ENCODE measurements at regions of chr17 and their contacts with region 1.

Region 1: DNA sequence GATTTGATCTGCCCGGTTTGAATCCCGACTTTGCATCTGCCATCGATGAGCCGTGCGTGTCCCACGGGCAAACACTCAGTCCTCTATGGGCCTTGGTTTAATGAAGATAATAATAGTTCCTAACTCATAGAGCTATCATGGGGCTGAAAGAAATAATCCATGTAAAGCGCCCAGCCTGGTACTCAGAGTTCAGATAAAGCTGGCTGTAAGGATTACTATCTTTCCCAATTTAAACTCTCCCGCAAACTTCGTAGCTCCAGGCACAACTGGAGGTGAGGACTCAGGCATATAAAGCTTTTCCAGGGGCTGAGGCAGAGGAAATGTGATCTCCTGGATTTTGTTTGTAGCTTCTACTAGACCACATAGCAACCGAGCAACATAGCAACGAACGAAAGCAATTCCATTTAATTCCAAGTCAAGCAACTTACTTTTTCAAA is 16.3 kb downstream of the ALOX15 start:
- DNase-seq: no peak
- H3K4me3 ChIP-seq: no peak overlapping the region
- CTCF ChIP-seq: no peak

Region 2: GRCh38 chr17:4420692-4421131 is 204.5 kb before region 1 on chr17:
- CTCF ChIA-PET with region 1: interaction called, 56 read pairs
- POLR2A ChIA-PET with region 1: no interaction called
- DNase-seq: peak; percentile 12
- H3K4me3 ChIP-seq: no peak overlapping the region; the same call in 1 of the 2 replicates
- CTCF ChIP-seq: peak; percentile 80

Region 3: GRCh38 chr17:4573669-4574068 is 51.5 kb before region 1 on chr17:
- CTCF ChIA-PET with region 1: interaction called, 268 read pairs
- POLR2A ChIA-PET with region 1: no interaction called
- DNase-seq: no peak
- H3K4me3 ChIP-seq: no peak overlapping the region
- CTCF ChIP-seq: no peak

Region 4: GRCh38 chr17:4607773-4608187 is 17.4 kb before region 1 on chr17:
- CTCF ChIA-PET with region 1: interaction called, 33 read pairs
- POLR2A ChIA-PET with region 1: no interaction called
- DNase-seq: no peak
- H3K4me3 ChIP-seq: no peak overlapping the region
- CTCF ChIP-seq: no peak

Region 5: GRCh38 chr17:4635823-4636375 is 10.7 kb after region 1 on chr17:
- CTCF ChIA-PET with region 1: interaction called, 13 read pairs
- POLR2A ChIA-PET with region 1: no interaction called
- DNase-seq: no peak
- H3K4me3 ChIP-seq: no peak overlapping the region
- CTCF ChIP-seq: no peak

Region 6: GRCh38 chr17:4641297-4642195 is 16.3 kb after region 1 on chr17 and contains the start of gene ALOX15:
- CTCF ChIA-PET with region 1: interaction called, 12 read pairs
- POLR2A ChIA-PET with region 1: no interaction called
- DNase-seq: no peak
- H3K4me3 ChIP-seq: no peak within 1 kb of the TSS
- CTCF ChIP-seq: no peak

Measured in AG04449 (cell line).